CD8-positive, alpha-beta memory T cell (primary cell): ENCODE measurements at regions of chr10 and their contacts with region 1.

Region 1: GRCh38 chr10:80487791-80488538 is 33.9 kb downstream of the TSPAN14 start:
- DNase-seq: peak; percentile 50 to 83 (median 72)
- H3K4me3 ChIP-seq: peak overlapping the region; percentile 58
- H3K4me3 Mint-ChIP-seq: peak overlapping the region; percentile 81 to 89 (median 84)
- H3K27ac ChIP-seq: peak overlapping the region; percentile 58
- H3K27ac Mint-ChIP-seq: peak overlapping the region; percentile 88 to 99 (median 96)
- H3K4me1 ChIP-seq: peaks cover 96% of the 10 kb centered on the region
- H3K4me1 Mint-ChIP-seq: peaks cover 96 to 100% (median 100%) of the 10 kb centered on the region in 3 donors
- H3K27me3 ChIP-seq: no peaks in the 10 kb centered on the region
- H3K27me3 Mint-ChIP-seq: peaks cover 0 to 5% of the 10 kb centered on the region in 2 donors

Region 2: DNA sequence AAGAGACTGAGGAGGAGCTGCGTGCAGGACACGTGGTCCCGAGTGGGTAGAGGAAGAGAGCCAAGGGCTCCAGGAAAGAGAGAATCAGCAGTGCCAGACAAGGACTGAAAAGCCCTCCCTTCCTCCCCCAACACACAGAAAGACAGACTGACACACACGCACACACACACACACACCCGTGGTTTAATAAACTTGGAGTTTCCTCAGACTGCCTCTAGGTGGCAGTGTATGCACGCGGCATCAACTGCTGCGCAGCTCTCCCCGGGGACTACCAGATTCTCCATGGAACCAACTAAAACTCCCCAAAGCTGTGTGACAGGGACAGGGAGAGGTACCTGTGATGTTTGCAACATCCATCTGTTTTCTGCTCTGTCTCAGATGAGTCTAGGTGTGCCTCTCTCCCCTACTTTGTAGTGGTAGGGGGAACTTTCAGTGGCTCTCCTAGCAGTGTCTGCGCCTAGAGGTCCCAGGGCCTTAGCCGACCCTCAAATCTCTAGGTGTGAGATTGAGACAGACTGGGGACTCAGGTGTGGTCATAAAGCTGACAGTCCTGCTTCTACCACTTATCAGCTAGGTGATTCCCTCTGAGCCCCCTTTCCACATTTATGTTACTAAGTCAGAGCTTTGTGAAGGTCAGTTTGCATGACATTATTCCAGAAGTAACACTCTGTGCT is 43.2 kb before region 1 on chr10:
- CTCF ChIA-PET with region 1: interaction called, 33 read pairs
- POLR2A ChIA-PET with region 1: interaction called, 7 read pairs
- DNase-seq: peak in 4 of 5 donors; percentile 16 to 83 (median 60)
- H3K4me3 ChIP-seq: no peak overlapping the region
- H3K4me3 Mint-ChIP-seq: no peak overlapping the region
- H3K27ac ChIP-seq: no peak overlapping the region
- H3K27ac Mint-ChIP-seq: peak overlapping the region in 7 of 8 donors; percentile 13 to 76 (median 38)
- H3K4me1 ChIP-seq: peaks cover 30% of the 10 kb centered on the region
- H3K4me1 Mint-ChIP-seq: peaks cover 24 to 56% (median 44%) of the 10 kb centered on the region in 3 donors
- H3K27me3 ChIP-seq: no peaks in the 10 kb centered on the region
- H3K27me3 Mint-ChIP-seq: no peaks in the 10 kb centered on the region

Region 3: GRCh38 chr10:80459047-80459931 is 28.7 kb before region 1 on chr10:
- CTCF ChIA-PET with region 1: interaction called, 9 read pairs
- POLR2A ChIA-PET with region 1: interaction called, 28 read pairs
- DNase-seq: peak; percentile 51 to 82 (median 61)
- H3K4me3 ChIP-seq: peak overlapping the region; percentile 76
- H3K4me3 Mint-ChIP-seq: peak overlapping the region; percentile 88 to 99 (median 99)
- H3K27ac ChIP-seq: peak overlapping the region; percentile 55
- H3K27ac Mint-ChIP-seq: peak overlapping the region; percentile 84 to 99 (median 95)
- H3K4me1 ChIP-seq: peaks cover 86% of the 10 kb centered on the region
- H3K4me1 Mint-ChIP-seq: peaks cover 85 to 92% (median 85%) of the 10 kb centered on the region in 3 donors
- H3K27me3 ChIP-seq: no peaks in the 10 kb centered on the region
- H3K27me3 Mint-ChIP-seq: no peaks in the 10 kb centered on the region

Region 4: DNA sequence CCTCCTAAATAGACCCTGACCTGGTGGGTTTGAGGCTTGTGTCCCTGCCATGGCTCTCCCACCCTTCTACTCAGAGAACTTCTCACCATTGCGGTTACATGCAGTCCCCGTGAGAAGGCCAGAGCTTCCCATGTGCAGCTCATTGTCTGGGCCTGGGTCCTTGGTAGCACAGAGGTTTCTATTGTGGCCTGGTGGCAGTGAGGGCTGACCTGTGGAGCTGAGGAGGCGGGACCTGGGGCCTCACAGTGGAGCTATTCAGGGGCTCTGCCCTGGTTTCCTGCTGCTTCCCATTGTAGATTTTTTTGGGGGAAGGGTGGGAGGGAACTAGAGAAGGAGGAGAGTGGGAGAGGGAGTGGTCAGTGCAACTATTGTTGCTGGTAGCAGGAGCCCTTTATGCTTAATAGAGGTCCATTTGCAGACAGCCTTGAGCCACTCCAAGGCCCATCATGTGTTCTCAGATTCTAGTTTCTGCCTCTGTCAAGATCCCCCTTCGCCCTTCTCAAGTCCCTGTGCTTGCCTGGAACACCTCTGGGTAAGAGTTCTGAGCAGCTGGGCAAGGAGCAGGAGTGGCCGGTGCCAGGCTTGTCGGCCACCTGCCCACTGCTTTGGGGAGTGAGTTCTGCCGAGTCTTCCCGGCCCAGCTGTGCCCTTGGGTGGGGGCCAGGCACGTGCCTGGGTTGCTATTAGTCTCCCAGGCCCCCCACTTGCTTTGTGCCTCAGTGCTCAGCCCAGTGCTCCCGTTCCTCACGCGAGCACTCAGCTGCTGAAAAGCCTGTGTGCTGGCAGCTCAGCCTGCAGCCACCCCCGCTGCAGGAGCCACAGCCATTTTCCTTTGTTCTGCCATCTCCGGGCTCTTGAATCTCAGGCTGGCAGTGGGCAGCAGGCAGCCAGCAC is 23.2 kb before region 1 on chr10:
- CTCF ChIA-PET with region 1: interaction called, 30 read pairs
- POLR2A ChIA-PET with region 1: interaction called, 39 read pairs
- DNase-seq: peak in 1 of 5 donors; percentile 49
- H3K4me3 ChIP-seq: peak overlapping the region; percentile 53
- H3K4me3 Mint-ChIP-seq: peak overlapping the region; percentile 68 to 99 (median 99)
- H3K27ac ChIP-seq: peak overlapping the region; percentile 22
- H3K27ac Mint-ChIP-seq: peak overlapping the region; percentile 84 to 100 (median 98)
- H3K4me1 ChIP-seq: peaks cover 100% of the 10 kb centered on the region
- H3K4me1 Mint-ChIP-seq: peaks cover 94 to 100% (median 100%) of the 10 kb centered on the region in 3 donors
- H3K27me3 ChIP-seq: no peaks in the 10 kb centered on the region
- H3K27me3 Mint-ChIP-seq: no peaks in the 10 kb centered on the region

Region 5: GRCh38 chr10:80472234-80473095 is 15.5 kb before region 1 on chr10:
- CTCF ChIA-PET with region 1: interaction called, 30 read pairs
- POLR2A ChIA-PET with region 1: interaction called, 39 read pairs
- DNase-seq: no peak
- H3K4me3 ChIP-seq: peak overlapping the region; percentile 36
- H3K4me3 Mint-ChIP-seq: peak overlapping the region; percentile 34 to 99 (median 78)
- H3K27ac ChIP-seq: peak overlapping the region; percentile 28
- H3K27ac Mint-ChIP-seq: peak overlapping the region; percentile 73 to 98 (median 95)
- H3K4me1 ChIP-seq: peaks cover 88% of the 10 kb centered on the region
- H3K4me1 Mint-ChIP-seq: peaks cover 88 to 97% (median 95%) of the 10 kb centered on the region in 3 donors
- H3K27me3 ChIP-seq: no peaks in the 10 kb centered on the region
- H3K27me3 Mint-ChIP-seq: no peaks in the 10 kb centered on the region

Region 6: GRCh38 chr10:80498833-80499741 is 11.1 kb after region 1 on chr10:
- CTCF ChIA-PET with region 1: interaction called, 96 read pairs
- POLR2A ChIA-PET with region 1: interaction called, 13 read pairs
- DNase-seq: peak in 2 of 5 donors; percentile 25 to 60
- H3K4me3 ChIP-seq: peak overlapping the region; percentile 35
- H3K4me3 Mint-ChIP-seq: peak overlapping the region; percentile 64 to 86 (median 78)
- H3K27ac ChIP-seq: peak overlapping the region; percentile 49
- H3K27ac Mint-ChIP-seq: peak overlapping the region; percentile 92 to 99 (median 96)
- H3K4me1 ChIP-seq: peaks cover 98% of the 10 kb centered on the region
- H3K4me1 Mint-ChIP-seq: peaks cover 97 to 100% (median 99%) of the 10 kb centered on the region in 3 donors
- H3K27me3 ChIP-seq: no peaks in the 10 kb centered on the region
- H3K27me3 Mint-ChIP-seq: no peaks in the 10 kb centered on the region

Region 7: DNA sequence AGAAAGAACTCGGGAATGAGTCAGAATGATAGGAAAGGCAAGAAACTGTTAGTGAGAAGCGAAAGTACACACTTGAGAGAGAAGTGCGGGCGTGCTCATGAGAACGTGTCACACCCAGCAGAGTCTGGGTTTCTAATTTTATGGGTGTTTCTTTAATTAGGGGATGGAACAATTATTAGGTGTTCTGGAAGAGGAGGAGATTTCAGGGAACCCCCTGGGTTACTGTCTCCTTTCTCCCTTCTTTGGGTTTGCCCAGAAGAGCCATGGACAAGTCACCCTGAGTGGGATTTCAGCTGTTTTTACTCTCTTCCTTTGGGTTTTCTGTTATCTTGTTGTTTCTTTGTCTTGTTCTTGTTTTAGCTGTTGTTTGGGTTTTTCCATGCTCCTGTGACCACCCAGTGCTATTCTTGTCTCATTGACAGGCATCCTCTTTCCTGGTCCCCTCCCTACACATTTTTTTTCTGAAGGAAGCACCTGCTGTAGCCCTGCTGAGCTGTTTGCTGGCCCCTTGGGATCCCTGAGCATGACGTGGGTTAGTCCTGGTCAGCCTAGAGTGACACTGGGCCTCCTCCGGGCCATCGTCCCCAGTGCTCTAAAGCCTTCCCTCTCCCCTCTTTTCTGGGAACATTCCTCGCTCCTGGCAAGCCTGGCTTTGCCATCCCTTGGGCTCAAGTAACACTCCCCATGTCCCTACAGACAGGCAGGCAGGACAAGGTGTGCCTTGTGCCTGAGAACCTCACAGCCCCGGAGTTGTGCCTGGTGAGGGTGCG is 53.2 kb after region 1 on chr10:
- CTCF ChIA-PET with region 1: no interaction called
- POLR2A ChIA-PET with region 1: no interaction called
- DNase-seq: no peak
- H3K4me3 ChIP-seq: no peak overlapping the region
- H3K4me3 Mint-ChIP-seq: peak overlapping the region in 1 of 7 donors; percentile 13
- H3K27ac ChIP-seq: no peak overlapping the region
- H3K27ac Mint-ChIP-seq: peak overlapping the region in 3 of 8 donors; percentile 50 to 68 (median 68)
- H3K4me1 ChIP-seq: peaks cover 7% of the 10 kb centered on the region
- H3K4me1 Mint-ChIP-seq: peaks cover 8 to 17% (median 13%) of the 10 kb centered on the region in 3 donors
- H3K27me3 ChIP-seq: no peaks in the 10 kb centered on the region
- H3K27me3 Mint-ChIP-seq: peaks cover 0 to 4% of the 10 kb centered on the region in 2 donors

Region 8: DNA sequence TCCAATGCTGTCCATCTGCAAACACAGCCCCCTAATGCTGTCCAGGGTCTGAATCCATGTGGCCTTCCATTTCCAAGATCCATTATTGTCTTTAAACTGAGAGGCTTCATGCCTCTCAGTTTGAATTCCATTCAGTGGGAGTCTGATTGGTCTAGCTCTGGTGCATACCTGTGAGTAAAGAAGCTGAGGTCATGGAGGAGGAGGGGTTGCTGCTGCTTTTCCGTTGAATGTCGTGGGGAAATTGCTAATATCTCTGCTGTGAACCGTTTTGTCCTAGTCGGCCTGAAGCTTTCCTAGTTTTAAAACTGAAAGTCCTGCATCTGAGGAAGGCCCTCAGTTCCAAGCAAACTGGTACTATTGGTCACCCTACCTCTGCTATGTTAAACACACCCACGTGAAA is 67.5 kb after region 1 on chr10:
- CTCF ChIA-PET with region 1: no interaction called
- POLR2A ChIA-PET with region 1: no interaction called
- DNase-seq: no peak
- H3K4me3 ChIP-seq: no peak overlapping the region
- H3K4me3 Mint-ChIP-seq: no peak overlapping the region
- H3K27ac ChIP-seq: no peak overlapping the region
- H3K27ac Mint-ChIP-seq: peak overlapping the region in 2 of 8 donors; percentile 11 to 55
- H3K4me1 ChIP-seq: no peaks in the 10 kb centered on the region
- H3K4me1 Mint-ChIP-seq: no peaks in the 10 kb centered on the region
- H3K27me3 ChIP-seq: no peaks in the 10 kb centered on the region
- H3K27me3 Mint-ChIP-seq: peaks cover 5 to 23% of the 10 kb centered on the region in 2 donors